HEK293 (cell line): ENCODE measurements at regions of chr15 and their contacts with region 1.

Region 1: GRCh38 chr15:94592495-94592894 is 361.1 kb downstream of the MCTP2 start:
- H3K4me3 ChIP-seq: no peak overlapping the region
- H3K27ac ChIP-seq: no peak overlapping the region
- H3K4me1 ChIP-seq: no peaks in the 10 kb centered on the region
- CTCF ChIP-seq: no peak

Region 2: GRCh38 chr15:94432279-94432678 is 160.2 kb before region 1 on chr15:
- CTCF ChIA-PET with region 1: no interaction called
- POLR2A ChIA-PET with region 1: no interaction called
- H3K4me3 ChIP-seq: no peak overlapping the region
- H3K27ac ChIP-seq: no peak overlapping the region
- H3K4me1 ChIP-seq: no peaks in the 10 kb centered on the region
- CTCF ChIP-seq: no peak

Region 3: GRCh38 chr15:94582369-94582768 is 10.1 kb before region 1 on chr15:
- CTCF ChIA-PET with region 1: interaction called, 12 read pairs
- POLR2A ChIA-PET with region 1: no interaction called
- H3K4me3 ChIP-seq: no peak overlapping the region
- H3K27ac ChIP-seq: no peak overlapping the region
- H3K4me1 ChIP-seq: no peaks in the 10 kb centered on the region
- CTCF ChIP-seq: no peak